Endothelial cell of umbilical vein (primary cell): ENCODE measurements at regions of chr14 and their contacts with region 1.

Region 1: GRCh38 chr14:91177073-91178034 is 63.5 kb downstream of the DGLUCY start:
- DNase-seq: peak; percentile 88
- H3K4me3 ChIP-seq: no peak overlapping the region
- H3K27ac ChIP-seq: no peak overlapping the region
- H3K4me1 ChIP-seq: peaks cover 4% of the 10 kb centered on the region
- H3K27me3 ChIP-seq: no peaks in the 10 kb centered on the region
- CTCF ChIP-seq: peak; percentile 69 to 74
- POLR2A ChIP-seq: no peak

Region 2: GRCh38 chr14:90758028-90758889 is 419.1 kb before region 1 on chr14:
- CTCF ChIA-PET with region 1: interaction called, 9 read pairs
- POLR2A ChIA-PET with region 1: no interaction called
- dilution Hi-C with region 1: no loop called
- intact Hi-C with region 1: loop called (anchors 2 kb)
- DNase-seq: peak; percentile 94
- H3K4me3 ChIP-seq: peak overlapping the region in 2 of 3 experiments; percentile 34
- H3K27ac ChIP-seq: peak overlapping the region; percentile 61
- H3K4me1 ChIP-seq: peaks cover 15% of the 10 kb centered on the region
- H3K27me3 ChIP-seq: no peaks in the 10 kb centered on the region
- CTCF ChIP-seq: peak; percentile 79 to 94
- POLR2A ChIP-seq: no peak

Region 3: DNA sequence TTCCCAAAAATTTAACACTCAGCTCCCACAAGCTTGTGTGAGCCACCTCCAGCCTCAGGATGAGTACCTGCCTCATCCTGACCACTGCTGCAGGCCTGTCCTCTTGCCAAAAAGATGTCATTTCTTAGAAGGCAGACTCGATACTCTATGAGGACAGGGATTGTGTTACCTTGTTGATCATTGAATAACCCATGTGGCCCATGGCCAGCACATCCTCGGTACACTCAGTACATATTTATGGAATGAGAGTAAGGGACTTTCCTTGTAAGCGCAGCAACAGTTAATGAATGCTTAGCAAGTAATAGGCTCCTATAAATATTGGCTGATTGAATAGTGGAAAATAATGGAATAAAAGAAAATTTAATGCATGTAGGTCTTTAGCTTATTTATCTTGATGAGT is 78.8 kb before region 1 on chr14:
- CTCF ChIA-PET with region 1: no interaction called
- POLR2A ChIA-PET with region 1: no interaction called
- dilution Hi-C with region 1: no loop called
- intact Hi-C with region 1: no loop called
- DNase-seq: no peak
- H3K4me3 ChIP-seq: no peak overlapping the region
- H3K27ac ChIP-seq: no peak overlapping the region
- H3K4me1 ChIP-seq: no peaks in the 10 kb centered on the region
- H3K27me3 ChIP-seq: peaks cover 0 to 2% of the 10 kb centered on the region in 2 experiments
- CTCF ChIP-seq: no peak
- POLR2A ChIP-seq: no peak

Region 4: DNA sequence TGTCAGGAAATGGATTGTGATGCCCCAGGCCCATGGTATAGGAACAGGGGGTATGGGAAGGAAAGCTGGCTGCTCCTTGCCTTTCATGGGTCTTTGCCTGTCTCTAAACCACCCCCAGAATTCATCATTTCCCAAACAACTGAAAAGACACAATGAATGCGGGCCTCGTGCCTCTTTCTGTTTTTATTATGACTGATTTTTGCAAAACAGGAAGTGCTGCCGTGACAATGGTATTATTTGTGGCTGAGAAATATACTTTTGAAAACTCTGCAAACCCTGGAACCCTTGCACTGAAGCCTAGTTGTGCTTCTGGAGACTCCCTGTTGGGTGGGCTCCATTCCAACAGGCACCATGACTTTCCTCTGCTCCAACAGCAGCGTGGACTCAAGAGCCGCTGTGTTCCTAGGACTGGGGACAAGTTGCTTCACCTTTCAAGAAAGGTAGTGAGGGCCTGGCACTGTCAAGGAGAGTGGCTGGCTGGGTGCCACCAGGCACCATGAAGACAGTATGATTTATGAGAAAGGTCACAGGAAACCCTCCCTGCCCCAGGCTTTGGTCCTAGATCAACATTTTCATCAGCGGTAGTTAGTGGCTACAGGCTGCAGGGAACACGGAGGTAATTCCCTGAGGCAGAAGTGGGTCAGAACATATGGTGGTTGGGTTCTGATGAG is 68.3 kb before region 1 on chr14:
- CTCF ChIA-PET with region 1: interaction called, 24 read pairs
- POLR2A ChIA-PET with region 1: no interaction called
- dilution Hi-C with region 1: no loop called
- intact Hi-C with region 1: loop called (anchors 2 kb)
- DNase-seq: peak; percentile 98
- H3K4me3 ChIP-seq: peak overlapping the region in 1 of 3 experiments; percentile 12
- H3K27ac ChIP-seq: peak overlapping the region; percentile 95
- H3K4me1 ChIP-seq: peaks cover 35% of the 10 kb centered on the region
- H3K27me3 ChIP-seq: no peaks in the 10 kb centered on the region
- CTCF ChIP-seq: no peak
- POLR2A ChIP-seq: no peak

Region 5: GRCh38 chr14:91154851-91155625 is 22.3 kb before region 1 on chr14:
- CTCF ChIA-PET with region 1: interaction called, 22 read pairs
- POLR2A ChIA-PET with region 1: no interaction called
- dilution Hi-C with region 1: no loop called
- intact Hi-C with region 1: no loop called
- DNase-seq: peak; percentile 88
- H3K4me3 ChIP-seq: no peak overlapping the region
- H3K27ac ChIP-seq: no peak overlapping the region
- H3K4me1 ChIP-seq: peaks cover 9% of the 10 kb centered on the region
- H3K27me3 ChIP-seq: no peaks in the 10 kb centered on the region
- CTCF ChIP-seq: no peak
- POLR2A ChIP-seq: no peak

Region 6: GRCh38 chr14:91244501-91244901 is 67.1 kb after region 1 on chr14 and contains the start of gene GPR68:
- CTCF ChIA-PET with region 1: interaction called, 30 read pairs
- POLR2A ChIA-PET with region 1: no interaction called
- dilution Hi-C with region 1: no loop called
- intact Hi-C with region 1: loop called (anchors 2 kb)
- DNase-seq: no peak
- H3K4me3 ChIP-seq: no peak within 1 kb of the TSS
- H3K27ac ChIP-seq: peak within 1 kb of the TSS; percentile 51
- H3K4me1 ChIP-seq: peaks cover 19% of the 10 kb centered on the region
- H3K27me3 ChIP-seq: no peaks in the 10 kb centered on the region
- CTCF ChIP-seq: no peak
- POLR2A ChIP-seq: no peak
- total RNA-seq, gene GPR68: 0.24 and 0.51 TPM in 2 replicates

Region 7: GRCh38 chr14:91281346-91281745 is 104.0 kb after region 1 on chr14:
- CTCF ChIA-PET with region 1: interaction called, 220 read pairs
- POLR2A ChIA-PET with region 1: interaction called, 8 read pairs
- dilution Hi-C with region 1: no loop called
- intact Hi-C with region 1: loop called (anchors 1 kb)
- DNase-seq: no peak
- H3K4me3 ChIP-seq: no peak overlapping the region
- H3K27ac ChIP-seq: no peak overlapping the region
- H3K4me1 ChIP-seq: no peaks in the 10 kb centered on the region
- H3K27me3 ChIP-seq: no peaks in the 10 kb centered on the region
- CTCF ChIP-seq: no peak
- POLR2A ChIP-seq: no peak

Region 8: GRCh38 chr14:91373591-91374254 is 196.4 kb after region 1 on chr14:
- CTCF ChIA-PET with region 1: no interaction called
- POLR2A ChIA-PET with region 1: no interaction called
- dilution Hi-C with region 1: no loop called
- intact Hi-C with region 1: no loop called
- DNase-seq: peak; percentile 63
- H3K4me3 ChIP-seq: peak overlapping the region in 1 of 3 experiments; percentile 25
- H3K27ac ChIP-seq: peak overlapping the region; percentile 29
- H3K4me1 ChIP-seq: peaks cover 56% of the 10 kb centered on the region
- H3K27me3 ChIP-seq: no peaks in the 10 kb centered on the region
- CTCF ChIP-seq: no peak
- POLR2A ChIP-seq: no peak